GM23248 (cell line): ENCODE measurements at regions of chr10 and their contacts with region 1.

Region 1: DNA sequence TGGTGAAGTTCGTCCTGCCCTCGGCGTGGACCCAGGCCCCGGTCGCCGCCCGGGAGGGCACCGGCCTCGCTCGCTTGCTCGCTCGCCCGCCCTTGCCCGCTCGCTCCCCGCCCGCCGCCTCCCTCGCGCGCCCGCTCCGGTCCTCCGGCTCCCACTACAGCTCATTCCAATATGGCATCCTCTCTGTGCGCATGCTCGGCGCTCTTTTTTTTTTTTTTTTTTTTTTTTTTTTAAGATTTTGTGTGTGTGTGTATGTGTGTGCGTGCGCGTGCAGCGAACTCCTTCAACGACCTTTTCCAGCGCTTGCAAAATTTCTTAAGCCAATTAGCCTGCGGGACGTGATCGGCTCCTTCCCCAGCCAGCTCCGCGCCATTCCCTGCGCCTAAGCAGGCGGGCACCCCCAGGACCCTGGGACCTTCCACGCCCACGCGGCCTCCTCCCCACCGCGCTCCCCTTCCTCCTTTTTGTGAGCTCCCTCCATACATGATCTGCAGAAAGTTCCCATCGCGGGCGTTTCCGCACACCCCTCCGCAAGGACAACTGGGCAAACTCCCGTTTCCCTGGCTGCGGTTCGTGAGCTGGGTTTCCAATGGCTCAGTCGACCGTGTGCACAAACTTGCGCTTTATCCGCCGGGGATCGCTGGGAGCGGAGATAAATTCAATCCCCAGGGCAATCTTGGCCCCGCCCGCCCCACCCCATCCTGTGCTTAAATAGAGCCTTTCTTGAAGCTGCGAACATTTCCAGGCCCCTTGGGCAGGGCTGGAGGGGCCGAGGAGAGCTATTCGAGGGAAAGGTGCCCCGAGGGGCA is at the start of gene SFMBT2:
- DNase-seq: peak; percentile 77
- H3K4me3 ChIP-seq: peak within 1 kb of the TSS; percentile 89
- H3K27ac ChIP-seq: no peak within 1 kb of the TSS
- H3K4me1 ChIP-seq: no peaks in the 10 kb centered on the region
- H3K27me3 ChIP-seq: peaks cover 52% of the 10 kb centered on the region
- total RNA-seq, gene SFMBT2: 0.13 and 0.22 TPM in 2 replicates

Region 2: GRCh38 chr10:6445501-6446316 is 965.4 kb before region 1 on chr10:
- in situ Hi-C with region 1: loop called (anchors 25 kb)
- DNase-seq: peak; percentile 58
- H3K4me3 ChIP-seq: no peak overlapping the region
- H3K27ac ChIP-seq: no peak overlapping the region
- H3K4me1 ChIP-seq: no peaks in the 10 kb centered on the region
- H3K27me3 ChIP-seq: no peaks in the 10 kb centered on the region; the same call in 1 of the 2 replicates

Region 3: DNA sequence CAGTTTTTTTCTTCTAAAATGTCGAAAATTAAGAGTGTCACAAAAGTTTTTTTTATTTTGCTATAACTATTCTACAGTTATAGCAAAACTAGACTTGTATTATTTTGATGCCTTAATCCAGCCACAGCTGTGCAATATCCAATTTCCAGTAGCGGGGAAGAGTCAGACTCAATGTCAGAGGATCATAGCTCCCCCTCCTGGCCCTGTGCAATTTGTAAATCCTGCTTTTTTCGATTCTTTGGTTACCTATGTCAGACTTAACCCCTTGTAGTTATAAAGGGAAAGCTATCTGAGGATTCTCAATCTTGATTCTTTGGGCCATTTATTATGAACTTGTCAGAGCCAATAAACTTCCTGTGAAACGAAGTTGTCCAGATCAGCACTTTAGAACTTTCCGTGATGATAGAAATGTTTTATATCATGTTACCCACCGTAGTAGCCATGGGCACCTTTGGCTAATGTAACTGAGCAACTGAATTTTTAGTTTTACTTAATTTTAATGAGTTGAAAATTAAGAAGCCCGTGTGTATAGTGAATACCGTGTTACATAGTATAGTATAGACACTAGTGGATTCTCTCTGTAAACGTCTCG is 743.3 kb before region 1 on chr10:
- in situ Hi-C with region 1: loop called (anchors 25 kb)
- DNase-seq: peak; percentile 58
- H3K4me3 ChIP-seq: no peak overlapping the region
- H3K27ac ChIP-seq: no peak overlapping the region
- H3K4me1 ChIP-seq: no peaks in the 10 kb centered on the region
- H3K27me3 ChIP-seq: peaks cover 7% of the 10 kb centered on the region; the same call in 1 of the 2 replicates

Region 4: GRCh38 chr10:7525314-7526016 is 114.4 kb after region 1 on chr10:
- in situ Hi-C with region 1: no loop called
- DNase-seq: peak; percentile 82
- H3K4me3 ChIP-seq: peak overlapping the region; percentile 53
- H3K27ac ChIP-seq: no peak overlapping the region
- H3K4me1 ChIP-seq: no peaks in the 10 kb centered on the region
- H3K27me3 ChIP-seq: peaks cover 25% of the 10 kb centered on the region; the same call in 1 of the 2 replicates